Prostate gland (tissue), 2 donors: ENCODE measurements at regions of chr11 and their contacts with region 1.

Region 1: DNA sequence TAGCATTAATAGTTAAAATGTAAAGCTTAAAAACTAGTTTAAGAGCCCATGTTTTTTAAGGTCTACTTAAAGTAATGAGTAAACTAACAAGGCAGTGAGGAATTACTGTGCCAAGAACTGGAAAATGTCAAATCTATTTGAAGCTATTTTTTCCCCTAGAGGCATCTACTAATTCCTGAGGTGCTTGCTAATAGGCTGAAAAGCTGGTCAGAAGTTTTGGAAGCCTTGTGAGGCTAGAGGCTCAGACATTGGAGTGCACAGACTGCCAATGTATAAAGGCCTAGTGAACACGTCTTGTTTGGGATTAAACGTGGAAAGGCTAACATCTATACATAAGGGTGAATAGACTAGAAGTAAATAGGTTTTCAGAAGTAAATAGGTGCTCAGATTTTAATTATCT is 136.5 kb upstream of the C11orf87 start:
- DNase-seq: no peak
- H3K4me3 ChIP-seq: no peak overlapping the region
- H3K27ac ChIP-seq: no peak overlapping the region
- H3K4me1 ChIP-seq: no peaks in the 10 kb centered on the region
- H3K27me3 ChIP-seq: no peaks in the 10 kb centered on the region
- CTCF ChIP-seq: no peak
- POLR2A ChIP-seq: no peak

Region 2: GRCh38 chr11:109349276-109350080 is 64.0 kb after region 1 on chr11:
- intact Hi-C with region 1: loop called (anchors 10 kb)
- DNase-seq: no peak
- H3K4me3 ChIP-seq: no peak overlapping the region
- H3K27ac ChIP-seq: no peak overlapping the region
- H3K4me1 ChIP-seq: no peaks in the 10 kb centered on the region
- H3K27me3 ChIP-seq: no peaks in the 10 kb centered on the region
- CTCF ChIP-seq: no peak
- POLR2A ChIP-seq: no peak